Ovary (tissue), 10 donors: ENCODE measurements at regions of chr10 and their contacts with region 1.

Region 1: GRCh38 chr10:119368991-119369869 is 161.9 kb downstream of the GRK5 start:
- DNase-seq: peak in 2 of 5 donors; percentile 43 to 63
- H3K4me3 ChIP-seq: no peak overlapping the region
- H3K27ac ChIP-seq: peak overlapping the region in 1 of 2 donors; percentile 76
- H3K4me1 ChIP-seq: peaks cover 37% of the 10 kb centered on the region
- H3K27me3 ChIP-seq: no peaks in the 10 kb centered on the region
- CTCF ChIP-seq: no peak
- EP300 ChIP-seq: no peak
- POLR2A ChIP-seq: no peak

Region 2: DNA sequence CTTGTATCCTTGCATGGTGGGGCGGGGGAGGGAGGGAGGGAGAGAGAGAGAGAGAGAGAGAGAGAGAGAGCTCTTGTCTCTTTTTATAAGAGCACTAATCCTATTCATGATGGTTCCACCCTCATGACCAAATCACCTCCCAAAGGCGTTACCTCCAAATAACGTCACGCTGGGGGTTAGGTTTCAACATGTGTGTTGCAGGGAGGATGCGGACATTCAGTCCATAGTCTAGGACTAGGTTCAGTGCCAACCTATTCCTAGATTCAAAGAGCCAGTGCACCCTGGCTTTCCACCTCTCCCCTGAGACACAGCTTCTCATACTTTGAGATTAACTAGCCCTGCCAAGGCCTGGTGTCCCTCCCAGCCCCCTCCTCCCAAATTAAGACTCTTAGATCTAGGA is 38.9 kb before region 1 on chr10:
- intact Hi-C with region 1: no loop called
- DNase-seq: no peak
- H3K4me3 ChIP-seq: no peak overlapping the region
- H3K27ac ChIP-seq: no peak overlapping the region
- H3K4me1 ChIP-seq: no peaks in the 10 kb centered on the region
- H3K27me3 ChIP-seq: no peaks in the 10 kb centered on the region
- CTCF ChIP-seq: no peak
- EP300 ChIP-seq: no peak
- POLR2A ChIP-seq: no peak

Region 3: GRCh38 chr10:119409866-119410299 is 40.7 kb after region 1 on chr10:
- intact Hi-C with region 1: loop called in 1 of 4 experiments (anchors 2 kb)
- DNase-seq: peak; percentile 93 to 95 (median 94)
- H3K4me3 ChIP-seq: no peak overlapping the region
- H3K27ac ChIP-seq: peak overlapping the region; percentile 23 to 93
- H3K4me1 ChIP-seq: peaks cover 39% of the 10 kb centered on the region
- H3K27me3 ChIP-seq: no peaks in the 10 kb centered on the region
- CTCF ChIP-seq: no peak
- EP300 ChIP-seq: peak; percentile 65
- POLR2A ChIP-seq: no peak

Region 4: GRCh38 chr10:119801176-119801575 is 431.9 kb after region 1 on chr10:
- intact Hi-C with region 1: no loop called
- DNase-seq: no peak
- H3K4me3 ChIP-seq: no peak overlapping the region
- H3K27ac ChIP-seq: no peak overlapping the region
- H3K4me1 ChIP-seq: no peaks in the 10 kb centered on the region
- H3K27me3 ChIP-seq: no peaks in the 10 kb centered on the region
- CTCF ChIP-seq: no peak
- EP300 ChIP-seq: no peak
- POLR2A ChIP-seq: no peak